ENCODE measurements at regions of chr18 and their contacts with region 1.

Region 1: GRCh38 chr18:44679056-44679905 is 1.4 kb upstream of the SETBP1 start:
- DNase-seq: peak; percentile 87
- H3K4me3 ChIP-seq: peak overlapping the region; percentile 67
- H3K27ac ChIP-seq: peak overlapping the region; percentile 88
- H3K4me1 ChIP-seq: peaks cover 22% of the 10 kb centered on the region
- H3K27me3 ChIP-seq: peaks cover 5% of the 10 kb centered on the region
- CTCF ChIP-seq: peak; percentile 63

Region 2: DNA sequence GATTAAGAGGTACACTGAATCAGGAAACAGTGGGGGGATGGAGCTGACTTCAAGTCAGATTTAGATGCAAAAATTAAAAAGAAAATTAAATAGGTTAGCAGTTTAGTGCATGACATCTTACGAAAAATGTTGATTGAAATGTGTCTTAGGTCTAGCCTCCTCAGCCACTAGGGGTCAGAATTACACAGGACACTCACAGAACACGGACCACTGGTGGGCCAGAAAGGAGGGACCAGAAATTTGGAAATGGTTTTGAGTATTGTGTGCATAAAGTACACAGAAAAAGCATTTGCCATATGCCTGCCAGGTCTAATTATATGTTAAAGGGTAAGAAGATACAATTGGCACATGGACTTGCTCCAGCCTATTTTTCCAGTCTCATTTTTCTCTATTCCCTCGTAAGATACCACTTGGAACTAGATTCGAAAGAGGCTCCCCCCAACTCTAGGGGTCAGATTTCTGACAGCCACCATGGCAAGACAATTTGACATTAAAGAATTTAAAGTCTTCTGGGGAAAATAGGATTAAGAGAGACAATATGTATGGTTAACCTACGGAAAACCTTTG is 548.8 kb before region 1 on chr18:
- CTCF ChIA-PET with region 1: no interaction called
- POLR2A ChIA-PET with region 1: no interaction called
- intact Hi-C with region 1: loop called (anchors 10 kb)
- DNase-seq: peak; percentile 64
- H3K4me3 ChIP-seq: no peak overlapping the region
- H3K27ac ChIP-seq: no peak overlapping the region
- H3K4me1 ChIP-seq: no peaks in the 10 kb centered on the region
- H3K27me3 ChIP-seq: no peaks in the 10 kb centered on the region
- CTCF ChIP-seq: peak; percentile 74

Region 3: DNA sequence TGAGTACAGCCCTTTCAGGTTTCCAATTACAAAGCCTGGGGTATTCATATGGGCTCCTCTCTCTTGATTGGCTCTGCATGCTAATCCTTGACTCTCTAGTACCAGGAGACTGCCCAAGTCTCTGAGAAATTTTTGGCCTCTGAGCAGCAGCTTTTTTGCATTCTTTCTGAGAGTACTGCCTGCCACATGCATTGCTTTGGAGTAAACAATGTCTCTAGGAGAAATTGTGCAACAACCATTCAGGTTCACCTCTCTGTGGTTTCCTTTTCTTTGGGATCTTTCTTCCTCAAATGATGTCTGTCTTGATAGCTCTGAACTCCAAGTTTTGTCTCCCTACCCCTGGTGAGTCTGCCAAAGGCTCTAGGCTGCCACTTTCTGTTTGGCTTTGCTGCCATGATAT is 114.4 kb before region 1 on chr18:
- CTCF ChIA-PET with region 1: no interaction called
- POLR2A ChIA-PET with region 1: no interaction called
- intact Hi-C with region 1: no loop called
- DNase-seq: no peak
- H3K4me3 ChIP-seq: no peak overlapping the region
- H3K27ac ChIP-seq: no peak overlapping the region
- H3K4me1 ChIP-seq: peaks cover 13% of the 10 kb centered on the region
- H3K27me3 ChIP-seq: no peaks in the 10 kb centered on the region
- CTCF ChIP-seq: no peak

Region 4: GRCh38 chr18:44638141-44638540 is 41.1 kb before region 1 on chr18:
- CTCF ChIA-PET with region 1: no interaction called
- POLR2A ChIA-PET with region 1: no interaction called
- intact Hi-C with region 1: no loop called
- DNase-seq: no peak
- H3K4me3 ChIP-seq: no peak overlapping the region
- H3K27ac ChIP-seq: no peak overlapping the region
- H3K4me1 ChIP-seq: no peaks in the 10 kb centered on the region
- H3K27me3 ChIP-seq: no peaks in the 10 kb centered on the region
- CTCF ChIP-seq: no peak

Region 5: GRCh38 chr18:44819944-44820510 is 140.7 kb after region 1 on chr18:
- CTCF ChIA-PET with region 1: no interaction called
- POLR2A ChIA-PET with region 1: no interaction called
- intact Hi-C with region 1: no loop called
- DNase-seq: no peak
- H3K4me3 ChIP-seq: no peak overlapping the region
- H3K27ac ChIP-seq: no peak overlapping the region
- H3K4me1 ChIP-seq: no peaks in the 10 kb centered on the region
- H3K27me3 ChIP-seq: no peaks in the 10 kb centered on the region
- CTCF ChIP-seq: no peak

Region 6: DNA sequence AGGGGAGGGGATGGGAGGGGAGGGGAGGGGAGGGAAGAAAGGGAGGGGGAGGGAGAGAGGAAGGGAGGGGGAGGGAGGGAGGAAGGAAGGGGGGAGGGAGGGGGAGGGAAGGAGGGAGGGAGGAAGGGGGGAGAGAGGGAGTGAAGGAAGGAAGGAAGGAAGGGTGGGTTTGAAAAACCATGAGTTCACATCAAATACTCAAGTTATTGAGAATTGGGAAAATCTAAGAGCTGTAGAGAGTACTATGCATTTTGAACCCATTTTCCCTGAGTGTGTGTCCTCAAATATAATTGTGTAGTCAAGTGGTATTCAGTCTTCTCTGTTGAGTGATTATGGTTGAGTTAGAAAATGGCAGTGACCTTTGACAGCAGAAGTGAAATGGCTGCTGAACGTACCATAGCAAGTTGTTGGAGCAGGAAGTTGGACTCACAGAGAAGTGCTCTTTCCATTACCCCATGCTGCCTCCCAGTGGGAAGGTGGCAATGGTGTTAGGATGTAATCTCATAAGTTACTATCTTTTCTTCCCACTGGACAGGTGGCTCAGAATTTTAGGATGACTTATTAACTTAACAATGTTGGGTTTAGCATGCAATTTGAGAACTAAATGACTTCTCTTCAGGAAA is 216.0 kb after region 1 on chr18:
- CTCF ChIA-PET with region 1: no interaction called
- POLR2A ChIA-PET with region 1: no interaction called
- intact Hi-C with region 1: loop called (anchors 5 kb)
- DNase-seq: peak; percentile 67
- H3K4me3 ChIP-seq: no peak overlapping the region
- H3K27ac ChIP-seq: no peak overlapping the region
- H3K4me1 ChIP-seq: peaks cover 21% of the 10 kb centered on the region
- H3K27me3 ChIP-seq: no peaks in the 10 kb centered on the region
- CTCF ChIP-seq: peak; percentile 52

Region 7: DNA sequence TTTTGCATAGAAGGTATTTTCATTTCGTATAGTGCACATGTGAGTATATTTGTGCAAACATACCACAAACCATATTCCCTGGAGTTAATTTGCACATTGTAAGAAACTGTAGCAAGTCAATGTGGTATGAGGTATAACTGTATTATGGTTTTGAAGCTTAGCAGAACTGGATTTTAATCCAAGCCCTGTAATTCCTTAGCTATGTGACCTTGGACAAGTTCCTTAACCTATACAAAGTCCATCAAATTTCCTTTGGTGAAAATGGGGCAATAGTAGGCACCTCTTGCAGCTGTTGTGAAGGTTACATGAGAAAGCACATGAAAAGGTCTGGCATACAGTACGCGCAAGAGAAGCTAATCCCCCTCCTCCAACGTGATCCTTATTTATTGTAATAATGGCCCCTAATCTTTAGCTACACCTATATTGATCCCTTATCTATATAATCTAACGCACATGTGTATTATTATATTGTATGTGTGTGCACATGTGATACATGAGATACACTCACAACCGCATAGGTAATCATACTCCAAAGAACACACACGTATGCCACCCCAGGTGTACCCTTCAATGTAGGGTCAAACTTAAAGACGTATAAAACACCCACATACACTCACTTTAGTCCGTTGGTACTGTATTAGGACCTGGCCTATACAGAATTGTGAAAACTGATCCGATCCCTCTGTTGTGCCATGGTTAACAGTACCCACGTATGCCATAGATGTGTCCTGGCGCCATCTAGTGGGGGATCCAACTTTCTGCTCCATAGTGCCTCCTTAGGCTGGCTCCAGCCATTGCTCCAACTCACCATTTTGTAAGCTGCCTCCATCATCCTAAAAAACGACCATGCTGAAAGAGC is 533.1 kb after region 1 on chr18:
- CTCF ChIA-PET with region 1: interaction called, 5 read pairs
- POLR2A ChIA-PET with region 1: no interaction called
- intact Hi-C with region 1: loop called (anchors 5 kb)
- DNase-seq: peak; percentile 87
- H3K4me3 ChIP-seq: no peak overlapping the region
- H3K27ac ChIP-seq: no peak overlapping the region
- H3K4me1 ChIP-seq: no peaks in the 10 kb centered on the region
- H3K27me3 ChIP-seq: no peaks in the 10 kb centered on the region
- CTCF ChIP-seq: peak; percentile 99